Naive thymus-derived CD4-positive, alpha-beta T cell (primary cell): ENCODE measurements at regions of chr12 and their contacts with region 1.

Region 1: GRCh38 chr12:1594261-1595025 is at the start of gene FBXL14:
- DNase-seq: peak; percentile 87 to 93 (median 92)
- ATAC-seq: peak; percentile 85
- H3K4me3 ChIP-seq: peak within 1 kb of the TSS; percentile 91
- H3K4me3 Mint-ChIP-seq: peak within 1 kb of the TSS; percentile 89 to 98 (median 95)
- H3K27ac ChIP-seq: peak within 1 kb of the TSS; percentile 80
- H3K27ac Mint-ChIP-seq: peak within 1 kb of the TSS; percentile 94 to 97 (median 94)
- H3K4me1 ChIP-seq: peaks cover 19 to 23% of the 10 kb centered on the region in 2 donors
- H3K4me1 Mint-ChIP-seq: peaks cover 40 to 53% (median 44%) of the 10 kb centered on the region in 7 donors
- H3K27me3 ChIP-seq: no peaks in the 10 kb centered on the region
- H3K27me3 Mint-ChIP-seq: peaks cover 0 to 9% (median 0%) of the 10 kb centered on the region in 5 donors
- total RNA-seq, gene FBXL14: 25.6 to 43.8 (median 28.1) TPM

Region 2: GRCh38 chr12:389139-390096 is 1205.0 kb before region 1 on chr12 and contains the start of gene KDM5A:
- CTCF ChIA-PET with region 1: no interaction called
- POLR2A ChIA-PET with region 1: interaction called, 3 read pairs
- intact Hi-C with region 1: loop called (anchors 2 to 5 kb)
- DNase-seq: peak; percentile 82 to 97 (median 94)
- ATAC-seq: peak; percentile 97
- H3K4me3 ChIP-seq: peak within 1 kb of the TSS; percentile 96
- H3K4me3 Mint-ChIP-seq: peak within 1 kb of the TSS; percentile 91 to 100 (median 97)
- H3K27ac ChIP-seq: peak within 1 kb of the TSS; percentile 91
- H3K27ac Mint-ChIP-seq: peak within 1 kb of the TSS; percentile 95 to 100 (median 99)
- H3K4me1 ChIP-seq: peaks cover 31% of the 10 kb centered on the region in 2 donors
- H3K4me1 Mint-ChIP-seq: peaks cover 28 to 55% (median 39%) of the 10 kb centered on the region in 7 donors
- H3K27me3 ChIP-seq: no peaks in the 10 kb centered on the region
- H3K27me3 Mint-ChIP-seq: peaks cover 0 to 3% (median 0%) of the 10 kb centered on the region in 5 donors
- total RNA-seq, gene KDM5A: 110 to 138 (median 124) TPM

Region 3: DNA sequence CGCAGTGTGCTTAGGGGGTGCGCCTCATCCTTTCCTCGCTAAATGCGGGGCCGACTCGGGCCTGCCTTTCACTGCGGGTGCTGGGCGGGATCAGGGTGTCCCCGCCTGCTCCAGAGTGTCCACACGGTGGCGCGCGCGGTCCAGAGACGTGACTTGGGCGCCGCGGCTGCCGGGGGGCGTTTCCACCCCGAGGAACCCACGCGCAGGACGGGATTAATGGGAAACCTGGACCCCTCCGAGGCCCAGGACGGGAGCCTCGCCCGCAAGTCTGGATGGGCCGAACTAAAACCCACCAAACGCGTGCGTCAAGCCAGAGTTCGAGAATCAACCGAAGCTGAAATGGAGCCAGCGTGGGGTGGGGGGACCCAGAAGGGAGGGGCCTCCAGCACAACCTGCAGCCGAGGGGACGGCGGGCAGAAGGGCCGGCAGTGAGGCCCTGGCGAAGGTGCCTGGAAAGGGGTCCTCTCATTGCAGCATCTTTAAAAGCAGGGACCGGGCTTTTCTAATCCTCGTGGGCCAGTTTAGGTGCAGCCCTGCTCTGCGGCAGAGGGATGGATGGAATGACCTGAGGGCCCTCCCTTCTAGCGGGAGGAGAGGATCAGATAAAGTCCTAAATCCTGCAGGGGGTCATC is 1024.5 kb before region 1 on chr12:
- CTCF ChIA-PET with region 1: no interaction called
- POLR2A ChIA-PET with region 1: no interaction called
- intact Hi-C with region 1: loop called (anchors 5 kb)
- DNase-seq: peak; percentile 72 to 90 (median 84)
- ATAC-seq: peak; percentile 99
- H3K4me3 ChIP-seq: peak overlapping the region; percentile 78
- H3K4me3 Mint-ChIP-seq: peak overlapping the region; percentile 81 to 92 (median 85)
- H3K27ac ChIP-seq: peak overlapping the region; percentile 69
- H3K27ac Mint-ChIP-seq: peak overlapping the region; percentile 47 to 91 (median 80)
- H3K4me1 ChIP-seq: peaks cover 25 to 47% of the 10 kb centered on the region in 2 donors
- H3K4me1 Mint-ChIP-seq: peaks cover 33 to 58% (median 54%) of the 10 kb centered on the region in 7 donors
- H3K27me3 ChIP-seq: no peaks in the 10 kb centered on the region
- H3K27me3 Mint-ChIP-seq: no peaks in the 10 kb centered on the region

Region 4: DNA sequence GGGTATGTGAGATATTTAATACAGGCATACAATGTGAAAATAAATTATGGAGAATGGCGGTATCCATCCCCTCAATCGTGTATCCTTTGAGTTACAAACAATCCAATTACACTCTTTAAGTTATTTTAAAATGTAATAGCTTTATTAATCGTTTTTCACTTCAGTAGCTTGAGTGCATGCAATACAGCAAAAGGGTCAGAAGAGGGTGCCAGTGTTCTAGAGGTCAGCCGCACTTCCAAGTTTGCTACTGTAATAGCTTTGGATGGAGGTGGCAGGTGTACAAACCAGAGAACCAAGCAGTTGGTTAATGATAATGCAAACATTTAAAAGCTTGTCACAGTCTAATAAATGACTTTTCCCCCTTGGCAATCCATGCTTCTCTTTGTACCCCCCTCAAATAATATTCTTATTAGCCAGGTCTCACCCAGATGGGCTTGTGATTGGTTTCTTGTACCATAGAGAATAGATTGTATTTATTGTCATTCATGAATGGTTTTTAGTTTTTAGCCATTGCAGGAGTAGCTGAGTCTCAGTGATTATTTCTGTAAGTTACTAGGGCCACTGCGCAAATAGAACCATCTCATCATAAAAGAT is 476.4 kb before region 1 on chr12:
- CTCF ChIA-PET with region 1: interaction called, 52 read pairs
- POLR2A ChIA-PET with region 1: interaction called, 5 read pairs
- intact Hi-C with region 1: no loop called
- DNase-seq: peak; percentile 25 to 70 (median 63)
- ATAC-seq: peak; percentile 74
- H3K4me3 ChIP-seq: no peak overlapping the region
- H3K4me3 Mint-ChIP-seq: no peak overlapping the region
- H3K27ac ChIP-seq: no peak overlapping the region
- H3K27ac Mint-ChIP-seq: no peak overlapping the region
- H3K4me1 ChIP-seq: peaks cover 4 to 7% of the 10 kb centered on the region in 2 donors
- H3K4me1 Mint-ChIP-seq: peaks cover 7 to 16% (median 9%) of the 10 kb centered on the region in 7 donors
- H3K27me3 ChIP-seq: no peaks in the 10 kb centered on the region
- H3K27me3 Mint-ChIP-seq: no peaks in the 10 kb centered on the region

Region 5: GRCh38 chr12:1567852-1568251 is 26.6 kb before region 1 on chr12:
- CTCF ChIA-PET with region 1: no interaction called
- POLR2A ChIA-PET with region 1: no interaction called
- intact Hi-C with region 1: no loop called
- DNase-seq: no peak
- ATAC-seq: no peak
- H3K4me3 ChIP-seq: no peak overlapping the region
- H3K4me3 Mint-ChIP-seq: no peak overlapping the region
- H3K27ac ChIP-seq: no peak overlapping the region
- H3K27ac Mint-ChIP-seq: no peak overlapping the region
- H3K4me1 ChIP-seq: no peaks in the 10 kb centered on the region
- H3K4me1 Mint-ChIP-seq: peaks cover 0 to 4% (median 0%) of the 10 kb centered on the region in 7 donors
- H3K27me3 ChIP-seq: no peaks in the 10 kb centered on the region
- H3K27me3 Mint-ChIP-seq: peaks cover 0 to 19% (median 5%) of the 10 kb centered on the region in 5 donors

Region 6: DNA sequence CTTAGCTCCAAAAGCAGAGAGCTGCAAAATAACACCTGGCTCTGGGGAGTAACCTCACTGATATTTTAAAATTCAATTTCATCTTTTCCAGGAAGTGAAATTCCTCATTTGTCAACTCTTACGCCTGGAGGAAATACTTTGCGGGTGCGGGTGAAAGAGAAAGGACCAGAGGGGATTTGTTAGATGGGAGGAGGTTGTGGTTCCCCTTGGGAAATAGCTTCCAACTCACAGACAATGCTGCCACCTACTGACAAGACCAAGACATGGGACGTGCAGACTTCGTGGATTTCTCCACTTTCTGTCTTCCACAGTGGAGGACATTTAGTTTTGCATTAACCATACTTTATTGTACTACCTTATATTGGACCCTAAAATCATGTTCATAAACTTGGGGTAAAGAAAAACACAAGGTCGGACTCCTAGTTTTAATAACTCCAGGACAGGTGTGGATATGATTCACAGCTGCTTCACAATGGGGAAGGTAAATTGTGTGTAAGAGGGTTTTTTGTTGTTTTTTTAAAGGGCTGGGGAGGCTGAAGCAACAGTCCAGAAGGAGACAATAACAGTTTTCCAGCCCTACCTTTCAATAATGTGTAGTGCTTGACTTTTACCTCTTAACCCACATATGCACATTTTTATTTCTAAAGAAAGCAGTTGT is 10.9 kb before region 1 on chr12:
- CTCF ChIA-PET with region 1: interaction called, 21 read pairs
- POLR2A ChIA-PET with region 1: interaction called, 24 read pairs
- intact Hi-C with region 1: loop called in 1 of 2 experiments (anchors 1 kb)
- DNase-seq: peak in 8 of 9 donors; percentile 42 to 73 (median 64)
- ATAC-seq: peak; percentile 84
- H3K4me3 ChIP-seq: no peak overlapping the region
- H3K4me3 Mint-ChIP-seq: peak overlapping the region in 4 of 10 donors; percentile 17 to 64 (median 44)
- H3K27ac ChIP-seq: no peak overlapping the region
- H3K27ac Mint-ChIP-seq: peak overlapping the region in 6 of 9 donors; percentile 1 to 66 (median 48)
- H3K4me1 ChIP-seq: peaks cover 6 to 13% of the 10 kb centered on the region in 2 donors
- H3K4me1 Mint-ChIP-seq: peaks cover 15 to 26% (median 23%) of the 10 kb centered on the region in 7 donors
- H3K27me3 ChIP-seq: no peaks in the 10 kb centered on the region
- H3K27me3 Mint-ChIP-seq: peaks cover 0 to 3% (median 0%) of the 10 kb centered on the region in 5 donors

Region 7: DNA sequence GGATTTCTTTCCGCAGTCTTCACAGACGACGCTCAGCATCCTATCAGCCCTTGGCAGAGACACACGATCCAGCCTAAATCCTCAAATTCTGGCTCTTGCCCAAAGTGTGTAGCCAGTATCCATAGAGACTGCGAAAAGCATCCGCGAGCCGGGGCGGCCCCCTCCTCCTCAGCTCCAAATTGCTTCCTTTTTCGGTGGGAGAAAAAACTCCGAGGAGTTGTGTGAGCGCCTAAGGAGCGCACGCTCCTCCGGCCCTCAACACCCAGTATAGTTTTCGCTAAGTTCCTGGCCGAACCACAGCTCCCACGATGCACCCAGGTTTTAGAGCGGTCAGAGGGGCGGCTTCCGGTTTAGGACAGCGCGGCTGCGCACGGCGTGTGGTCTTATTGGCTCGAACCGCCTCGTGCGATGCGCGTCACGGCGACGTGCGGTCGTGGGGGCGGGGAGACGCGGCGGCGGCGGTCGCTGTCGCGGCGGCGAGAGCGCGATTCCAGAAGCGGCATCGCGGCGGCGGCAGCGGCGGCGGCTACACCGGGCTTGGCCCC is 96.2 kb after region 1 on chr12 and contains the start of gene ADIPOR2:
- CTCF ChIA-PET with region 1: no interaction called
- POLR2A ChIA-PET with region 1: interaction called, 3 read pairs
- intact Hi-C with region 1: loop called in 1 of 2 experiments (anchors 2 kb)
- DNase-seq: peak; percentile 91 to 96 (median 95)
- ATAC-seq: peak; percentile 99
- H3K4me3 ChIP-seq: peak within 1 kb of the TSS; percentile 76
- H3K4me3 Mint-ChIP-seq: peak within 1 kb of the TSS; percentile 94 to 99 (median 98)
- H3K27ac ChIP-seq: peak within 1 kb of the TSS; percentile 91
- H3K27ac Mint-ChIP-seq: peak within 1 kb of the TSS; percentile 96 to 100 (median 98)
- H3K4me1 ChIP-seq: peaks cover 7 to 9% of the 10 kb centered on the region in 2 donors
- H3K4me1 Mint-ChIP-seq: peaks cover 26 to 59% (median 52%) of the 10 kb centered on the region in 7 donors
- H3K27me3 ChIP-seq: no peaks in the 10 kb centered on the region
- H3K27me3 Mint-ChIP-seq: peaks cover 0 to 13% (median 0%) of the 10 kb centered on the region in 5 donors
- total RNA-seq, gene ADIPOR2: 19.8 to 51.4 (median 36.4) TPM